ENCODE measurements at regions of chr17 and their contacts with region 1.

Region 1: DNA sequence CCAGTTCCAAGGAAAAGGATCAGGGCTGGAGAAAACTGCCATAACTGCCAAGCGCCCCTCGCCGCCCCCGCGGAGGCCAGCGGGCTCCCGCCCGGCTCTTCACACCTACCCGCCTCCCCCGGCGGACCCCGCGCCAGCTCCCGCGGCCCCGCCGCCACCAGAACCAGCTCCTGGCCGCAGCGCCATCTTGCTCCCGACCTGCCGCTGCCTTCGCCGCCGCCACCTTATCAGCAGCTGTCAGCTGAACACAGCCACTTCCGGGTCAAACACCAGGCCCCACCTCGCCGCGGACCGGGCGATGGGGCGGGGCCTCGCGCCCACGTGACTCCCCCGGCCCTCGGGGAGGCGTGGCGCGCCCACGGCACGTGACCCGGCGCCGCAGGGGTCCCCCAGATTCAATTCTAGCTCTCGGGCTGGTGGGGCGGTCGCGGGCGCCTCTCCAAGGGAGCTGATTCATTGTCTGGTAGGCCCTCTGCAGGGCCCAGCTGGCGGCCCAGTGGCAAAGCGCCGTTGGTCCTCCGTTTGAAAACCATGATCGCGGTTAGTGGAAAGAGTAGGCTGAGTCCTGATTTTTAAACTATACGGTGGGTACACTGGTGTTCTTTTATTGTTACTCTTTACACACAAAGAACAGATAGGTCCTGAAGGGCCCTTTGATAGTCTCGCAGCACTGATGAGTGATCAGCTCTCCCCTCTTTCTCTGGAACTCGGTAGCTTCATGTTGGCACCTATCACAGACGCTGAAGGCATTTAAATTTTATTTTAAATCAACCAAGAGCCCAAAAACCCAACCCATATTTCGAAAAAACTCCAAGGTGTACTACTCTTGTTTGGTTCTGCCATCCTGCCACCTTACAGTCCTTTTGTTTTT is at the start of gene SYNRG:
- DNase-seq: peak; percentile 86 to 98 (median 94)
- ATAC-seq: peak; percentile 78
- H3K4me3 ChIP-seq: peak within 1 kb of the TSS; percentile 79
- H3K4me3 Mint-ChIP-seq: peak within 1 kb of the TSS; percentile 99
- H3K27ac ChIP-seq: peak within 1 kb of the TSS; percentile 77 to 92
- H3K27ac Mint-ChIP-seq: peak within 1 kb of the TSS; percentile 93
- H3K4me1 ChIP-seq: peaks cover 24% of the 10 kb centered on the region
- H3K4me1 Mint-ChIP-seq: peaks cover 48% of the 10 kb centered on the region
- H3K27me3 ChIP-seq: no peaks in the 10 kb centered on the region
- H3K27me3 Mint-ChIP-seq: no peaks in the 10 kb centered on the region
- CTCF ChIP-seq: peak; percentile 69
- total RNA-seq, gene SYNRG: 40.0 to 45.8 TPM

Region 2: GRCh38 chr17:37413875-37414519 is 195.4 kb before region 1 on chr17:
- CTCF ChIA-PET with region 1: no interaction called
- POLR2A ChIA-PET with region 1: interaction called, 5 read pairs
- intact Hi-C with region 1: loop called in 1 of 2 experiments (anchors 10 kb)
- DNase-seq: no peak
- ATAC-seq: no peak
- H3K4me3 ChIP-seq: no peak overlapping the region
- H3K4me3 Mint-ChIP-seq: peak overlapping the region; percentile 16
- H3K27ac ChIP-seq: no peak overlapping the region
- H3K27ac Mint-ChIP-seq: no peak overlapping the region
- H3K4me1 ChIP-seq: peaks cover 1% of the 10 kb centered on the region
- H3K4me1 Mint-ChIP-seq: peaks cover 11% of the 10 kb centered on the region
- H3K27me3 ChIP-seq: no peaks in the 10 kb centered on the region
- H3K27me3 Mint-ChIP-seq: no peaks in the 10 kb centered on the region
- CTCF ChIP-seq: no peak

Region 3: GRCh38 chr17:37527249-37527851 is 82.1 kb before region 1 on chr17:
- CTCF ChIA-PET with region 1: interaction called, 5 read pairs
- POLR2A ChIA-PET with region 1: no interaction called
- intact Hi-C with region 1: loop called in 1 of 2 experiments (anchors 5 kb)
- DNase-seq: peak in 6 of 14 experiments; percentile 5 to 65 (median 40)
- ATAC-seq: peak; percentile 87
- H3K4me3 ChIP-seq: no peak overlapping the region
- H3K4me3 Mint-ChIP-seq: no peak overlapping the region
- H3K27ac ChIP-seq: no peak overlapping the region
- H3K27ac Mint-ChIP-seq: peak overlapping the region; percentile 37
- H3K4me1 ChIP-seq: no peaks in the 10 kb centered on the region
- H3K4me1 Mint-ChIP-seq: peaks cover 17% of the 10 kb centered on the region
- H3K27me3 ChIP-seq: no peaks in the 10 kb centered on the region
- H3K27me3 Mint-ChIP-seq: no peaks in the 10 kb centered on the region
- CTCF ChIP-seq: peak; percentile 65

Region 4: DNA sequence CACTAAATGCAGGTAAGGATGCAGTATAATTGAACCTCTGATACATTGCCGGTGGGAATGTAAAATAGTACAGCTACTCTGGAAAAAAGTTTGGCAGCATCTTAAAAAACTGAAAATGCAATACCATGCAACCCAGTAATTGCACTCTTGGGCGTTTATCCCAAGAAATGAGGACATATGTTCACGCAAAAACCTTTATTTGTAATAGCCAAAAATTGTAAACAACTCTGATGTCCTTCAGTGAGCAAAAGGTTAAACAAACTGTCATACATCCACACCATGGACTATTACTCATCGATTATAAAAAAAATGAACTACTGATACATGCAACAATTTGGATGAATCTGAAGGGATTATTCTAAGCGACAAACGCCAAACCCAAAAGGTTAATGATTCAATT is 17.1 kb before region 1 on chr17:
- CTCF ChIA-PET with region 1: interaction called, 12 read pairs
- POLR2A ChIA-PET with region 1: interaction called, 7 read pairs
- intact Hi-C with region 1: no loop called
- DNase-seq: no peak
- ATAC-seq: no peak
- H3K4me3 ChIP-seq: no peak overlapping the region
- H3K4me3 Mint-ChIP-seq: no peak overlapping the region
- H3K27ac ChIP-seq: no peak overlapping the region
- H3K27ac Mint-ChIP-seq: no peak overlapping the region
- H3K4me1 ChIP-seq: peaks cover 14% of the 10 kb centered on the region
- H3K4me1 Mint-ChIP-seq: peaks cover 77% of the 10 kb centered on the region
- H3K27me3 ChIP-seq: no peaks in the 10 kb centered on the region
- H3K27me3 Mint-ChIP-seq: no peaks in the 10 kb centered on the region
- CTCF ChIP-seq: no peak

Region 5: DNA sequence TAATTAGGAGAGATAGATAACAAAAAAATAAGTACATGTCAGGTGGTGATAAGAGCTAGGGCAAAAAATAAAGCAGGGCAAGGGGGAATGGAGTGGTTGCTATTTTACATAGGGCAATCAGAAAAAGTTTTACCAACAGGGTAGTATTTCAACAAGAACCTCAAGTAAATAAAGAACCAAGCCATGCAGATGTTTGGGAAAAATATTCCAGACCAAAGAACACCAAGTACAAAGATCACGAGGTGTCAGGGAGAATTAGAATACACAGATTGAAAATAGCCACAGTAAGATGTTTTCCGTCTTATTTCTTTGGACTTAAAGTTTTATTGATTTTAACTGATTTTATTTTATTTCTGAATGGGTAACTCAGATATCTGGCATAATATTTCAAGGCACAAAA is 11.3 kb before region 1 on chr17:
- CTCF ChIA-PET with region 1: interaction called, 19 read pairs
- POLR2A ChIA-PET with region 1: interaction called, 10 read pairs
- intact Hi-C with region 1: no loop called
- DNase-seq: no peak
- ATAC-seq: no peak
- H3K4me3 ChIP-seq: no peak overlapping the region
- H3K4me3 Mint-ChIP-seq: no peak overlapping the region
- H3K27ac ChIP-seq: no peak overlapping the region
- H3K27ac Mint-ChIP-seq: peak overlapping the region; percentile 21
- H3K4me1 ChIP-seq: peaks cover 19% of the 10 kb centered on the region
- H3K4me1 Mint-ChIP-seq: peaks cover 72% of the 10 kb centered on the region
- H3K27me3 ChIP-seq: no peaks in the 10 kb centered on the region
- H3K27me3 Mint-ChIP-seq: no peaks in the 10 kb centered on the region
- CTCF ChIP-seq: no peak

Region 6: DNA sequence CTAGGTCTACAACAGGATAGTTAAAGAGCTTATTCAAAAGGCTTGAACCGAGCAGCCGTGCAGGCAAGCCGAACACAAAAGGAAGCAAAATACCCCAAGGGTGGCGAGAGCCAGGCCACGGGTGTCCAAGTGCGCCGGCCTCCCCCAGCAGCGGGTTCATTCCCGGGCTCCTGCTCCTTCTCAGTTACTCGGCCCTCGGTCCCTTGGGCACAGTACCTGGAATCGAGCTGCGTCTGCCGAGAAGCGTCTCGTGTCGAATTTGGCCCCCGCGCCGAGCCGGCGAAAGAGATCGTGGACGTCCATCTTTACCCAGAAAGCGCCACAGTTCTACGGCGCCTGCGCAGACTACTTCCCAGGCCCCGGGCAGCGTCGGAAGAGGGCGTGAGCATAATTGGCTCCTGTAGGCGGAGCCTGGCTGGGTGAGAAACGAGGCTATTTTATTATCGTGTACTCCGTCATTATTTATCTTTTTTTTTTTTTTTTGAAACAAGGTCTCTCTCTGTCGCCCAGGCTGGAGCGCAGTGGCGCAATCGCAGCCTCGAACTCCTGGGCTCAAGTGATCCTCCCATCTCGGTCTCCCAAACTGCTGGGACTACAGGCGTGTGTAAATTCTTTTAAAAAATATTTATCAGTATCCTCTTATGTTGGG is 33.8 kb after region 1 on chr17 and contains the start of gene DDX52:
- CTCF ChIA-PET with region 1: interaction called, 4 read pairs
- POLR2A ChIA-PET with region 1: interaction called, 10 read pairs
- intact Hi-C with region 1: loop called in 1 of 2 experiments (anchors 2 kb)
- DNase-seq: peak; percentile 79 to 96 (median 86)
- ATAC-seq: peak; percentile 100
- H3K4me3 ChIP-seq: peak within 1 kb of the TSS; percentile 74
- H3K4me3 Mint-ChIP-seq: peak within 1 kb of the TSS; percentile 97
- H3K27ac ChIP-seq: peak within 1 kb of the TSS; percentile 61 to 66
- H3K27ac Mint-ChIP-seq: peak within 1 kb of the TSS; percentile 92
- H3K4me1 ChIP-seq: peaks cover 14% of the 10 kb centered on the region
- H3K4me1 Mint-ChIP-seq: peaks cover 40% of the 10 kb centered on the region
- H3K27me3 ChIP-seq: peaks cover 16% of the 10 kb centered on the region in 2 experiments
- H3K27me3 Mint-ChIP-seq: peaks cover 41% of the 10 kb centered on the region
- CTCF ChIP-seq: no peak
- total RNA-seq, gene DDX52: 27.4 to 30.1 TPM

Region 7: GRCh38 chr17:37774504-37774903 is 165.1 kb after region 1 on chr17:
- CTCF ChIA-PET with region 1: no interaction called
- POLR2A ChIA-PET with region 1: no interaction called
- intact Hi-C with region 1: no loop called
- DNase-seq: peak in 3 of 14 experiments; percentile 23 to 54 (median 31)
- ATAC-seq: no peak
- H3K4me3 ChIP-seq: no peak overlapping the region
- H3K4me3 Mint-ChIP-seq: no peak overlapping the region
- H3K27ac ChIP-seq: no peak overlapping the region
- H3K27ac Mint-ChIP-seq: no peak overlapping the region
- H3K4me1 ChIP-seq: peaks cover 5% of the 10 kb centered on the region
- H3K4me1 Mint-ChIP-seq: peaks cover 4% of the 10 kb centered on the region
- H3K27me3 ChIP-seq: no peaks in the 10 kb centered on the region
- H3K27me3 Mint-ChIP-seq: peaks cover 8% of the 10 kb centered on the region
- CTCF ChIP-seq: no peak

Measured in CD4-positive, alpha-beta T cell (primary cell).